ENCODE measurements at regions of chr4 and their contacts with region 1.

Region 1: GRCh38 chr4:159201168-159201567 is 98.3 kb downstream of the RAPGEF2 start:
- DNase-seq: no peak
- ATAC-seq: no peak
- H3K4me3 ChIP-seq: no peak overlapping the region
- H3K27ac ChIP-seq: no peak overlapping the region
- H3K4me1 ChIP-seq: peaks cover 18% of the 10 kb centered on the region
- H3K27me3 ChIP-seq: no peaks in the 10 kb centered on the region
- CTCF ChIP-seq: no peak
- EP300 ChIP-seq: no peak
- POLR2A ChIP-seq: no peak
- RAD21 ChIP-seq: no peak

Region 2: DNA sequence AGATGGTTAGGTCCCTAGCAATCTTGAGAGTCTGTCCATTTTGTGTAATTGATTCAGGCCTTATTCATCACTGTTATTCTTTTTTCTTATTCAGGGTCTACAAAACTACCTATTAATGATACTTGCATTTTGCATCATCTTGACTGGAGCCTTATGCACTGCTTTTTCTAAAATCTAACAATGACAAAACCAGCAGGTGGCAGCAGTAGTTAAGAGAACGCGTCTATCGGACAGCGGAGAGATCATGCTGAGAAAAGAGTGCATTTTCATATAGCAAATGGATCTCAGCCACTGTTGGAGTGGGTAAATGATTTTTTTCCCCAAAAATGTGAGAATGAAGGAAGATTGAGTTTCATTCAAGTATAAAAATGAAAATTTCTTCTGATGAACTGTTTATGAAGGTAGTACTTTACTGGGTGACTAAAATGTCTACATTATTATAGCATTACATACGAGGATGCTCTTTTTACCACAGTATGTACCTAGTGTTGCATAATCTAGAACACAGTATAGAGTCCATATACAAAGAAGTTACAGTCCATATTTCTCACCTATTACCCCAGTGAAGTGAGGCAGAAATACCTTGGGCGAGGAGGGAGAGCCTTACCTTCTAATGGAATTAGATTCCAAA is 947.7 kb before region 1 on chr4:
- CTCF ChIA-PET with region 1: interaction called, 3 read pairs
- POLR2A ChIA-PET with region 1: no interaction called
- RAD21 ChIA-PET with region 1: no interaction called
- SMC1A ChIA-PET with region 1: no interaction called
- in situ Hi-C with region 1: loop called (anchors 25 kb)
- intact Hi-C with region 1: loop called (anchors 5 kb)
- DNase-seq: no peak
- ATAC-seq: peak; percentile 89
- H3K4me3 ChIP-seq: no peak overlapping the region
- H3K27ac ChIP-seq: no peak overlapping the region
- H3K4me1 ChIP-seq: no peaks in the 10 kb centered on the region
- H3K27me3 ChIP-seq: no peaks in the 10 kb centered on the region
- CTCF ChIP-seq: peak; percentile 50 to 72 (median 63); a peak in 5 of 6 replicates
- EP300 ChIP-seq: no peak
- POLR2A ChIP-seq: no peak
- RAD21 ChIP-seq: peak; percentile 67

Region 3: GRCh38 chr4:158729716-158730559 is 471.2 kb before region 1 on chr4:
- CTCF ChIA-PET with region 1: interaction called, 4 read pairs
- POLR2A ChIA-PET with region 1: no interaction called
- RAD21 ChIA-PET with region 1: no interaction called
- SMC1A ChIA-PET with region 1: no interaction called
- in situ Hi-C with region 1: loop called (anchors 5 kb)
- intact Hi-C with region 1: loop called (anchors 2 kb)
- DNase-seq: peak; percentile 44
- ATAC-seq: peak; percentile 97
- H3K4me3 ChIP-seq: no peak overlapping the region
- H3K27ac ChIP-seq: no peak overlapping the region
- H3K4me1 ChIP-seq: no peaks in the 10 kb centered on the region
- H3K27me3 ChIP-seq: peaks cover 0 to 2% of the 10 kb centered on the region in 2 experiments; a peak in 1 of 4 replicates
- CTCF ChIP-seq: peak; percentile 81 to 97 (median 85)
- EP300 ChIP-seq: no peak
- POLR2A ChIP-seq: no peak
- RAD21 ChIP-seq: peak; percentile 85

Region 4: GRCh38 chr4:158856852-158857251 is 344.3 kb before region 1 on chr4:
- CTCF ChIA-PET with region 1: interaction called, 153 read pairs
- POLR2A ChIA-PET with region 1: interaction called, 3 read pairs
- RAD21 ChIA-PET with region 1: interaction called, 25 read pairs
- SMC1A ChIA-PET with region 1: interaction called, 78 read pairs
- in situ Hi-C with region 1: loop called (anchors 5 kb)
- intact Hi-C with region 1: loop called (anchors 1 kb)
- DNase-seq: no peak
- ATAC-seq: peak; percentile 78
- H3K4me3 ChIP-seq: no peak overlapping the region
- H3K27ac ChIP-seq: no peak overlapping the region
- H3K4me1 ChIP-seq: peaks cover 8% of the 10 kb centered on the region
- H3K27me3 ChIP-seq: no peaks in the 10 kb centered on the region
- CTCF ChIP-seq: peak; percentile 51 to 71 (median 52); a peak in 5 of 6 replicates
- EP300 ChIP-seq: no peak
- POLR2A ChIP-seq: no peak
- RAD21 ChIP-seq: peak; percentile 93

Region 5: GRCh38 chr4:159175085-159175988 is 25.8 kb before region 1 on chr4:
- CTCF ChIA-PET with region 1: interaction called, 25 read pairs
- POLR2A ChIA-PET with region 1: interaction called, 3 read pairs
- RAD21 ChIA-PET with region 1: interaction called, 12 read pairs
- SMC1A ChIA-PET with region 1: interaction called, 30 read pairs
- in situ Hi-C with region 1: no loop called
- intact Hi-C with region 1: loop called (anchors 1 kb)
- DNase-seq: peak; percentile 73
- ATAC-seq: peak; percentile 82
- H3K4me3 ChIP-seq: peak overlapping the region; percentile 60
- H3K27ac ChIP-seq: no peak overlapping the region; the same call in 1 of the 2 replicates
- H3K4me1 ChIP-seq: peaks cover 58% of the 10 kb centered on the region
- H3K27me3 ChIP-seq: no peaks in the 10 kb centered on the region
- CTCF ChIP-seq: peak; percentile 59 to 85 (median 75)
- EP300 ChIP-seq: no peak
- POLR2A ChIP-seq: no peak
- RAD21 ChIP-seq: peak; percentile 98

Region 6: DNA sequence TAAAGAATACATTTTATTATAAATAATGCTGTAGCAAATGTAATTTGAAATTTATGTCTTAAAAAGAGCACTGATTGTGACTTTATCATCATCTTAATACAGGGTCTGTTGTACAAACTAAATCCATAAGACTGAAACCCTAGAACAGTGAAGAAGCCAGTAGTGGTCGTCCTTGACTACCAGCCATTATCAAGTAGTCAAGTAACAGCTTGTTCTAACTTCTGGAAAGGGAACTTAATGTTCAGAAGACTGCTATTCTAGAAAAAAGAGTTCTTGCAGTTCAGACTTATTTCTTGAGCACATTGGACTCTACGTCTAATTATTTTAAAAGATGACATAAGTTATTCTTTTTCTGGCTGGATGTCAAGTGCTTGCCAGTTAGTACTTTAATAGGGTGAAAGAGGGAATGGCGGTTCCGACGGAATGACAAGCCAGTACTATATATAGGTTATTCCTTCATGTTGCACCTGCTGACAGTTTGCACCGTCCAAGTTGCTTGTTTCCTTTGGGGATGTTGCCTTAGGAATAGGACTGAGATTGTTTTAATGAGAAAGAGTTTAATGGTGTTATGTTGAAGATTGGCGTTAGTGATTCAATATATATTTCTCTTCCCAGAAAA is 11.6 kb after region 1 on chr4:
- CTCF ChIA-PET with region 1: interaction called, 12 read pairs
- POLR2A ChIA-PET with region 1: no interaction called
- RAD21 ChIA-PET with region 1: interaction called, 3 read pairs
- SMC1A ChIA-PET with region 1: interaction called, 17 read pairs
- in situ Hi-C with region 1: no loop called
- intact Hi-C with region 1: no loop called
- DNase-seq: no peak
- ATAC-seq: no peak
- H3K4me3 ChIP-seq: no peak overlapping the region
- H3K27ac ChIP-seq: no peak overlapping the region
- H3K4me1 ChIP-seq: no peaks in the 10 kb centered on the region
- H3K27me3 ChIP-seq: no peaks in the 10 kb centered on the region
- CTCF ChIP-seq: no peak
- EP300 ChIP-seq: no peak
- POLR2A ChIP-seq: no peak
- RAD21 ChIP-seq: no peak